T-cell (primary cell): ENCODE measurements at regions of chr1 and their contacts with region 1.

Region 1: GRCh38 chr1:205492201-205492667 is 12.2 kb upstream of the CDK18 start:
- DNase-seq: no peak
- ATAC-seq: no peak
- H3K4me3 ChIP-seq: no peak overlapping the region
- H3K4me3 Mint-ChIP-seq: no peak overlapping the region
- H3K27ac ChIP-seq: no peak overlapping the region
- H3K27ac Mint-ChIP-seq: no peak overlapping the region
- H3K4me1 ChIP-seq: no peaks in the 10 kb centered on the region
- H3K4me1 Mint-ChIP-seq: peaks cover 0 to 6% (median 0%) of the 10 kb centered on the region in 3 donors
- H3K27me3 ChIP-seq: peaks cover 3 to 64% of the 10 kb centered on the region in 2 experiments
- H3K27me3 Mint-ChIP-seq: peaks cover 35 to 45% of the 10 kb centered on the region in 2 donors

Region 2: GRCh38 chr1:205515781-205516253 is 23.6 kb after region 1 on chr1:
- CTCF ChIA-PET with region 1: no interaction called
- POLR2A ChIA-PET with region 1: no interaction called
- DNase-seq: no peak
- ATAC-seq: no peak
- H3K4me3 ChIP-seq: no peak overlapping the region
- H3K4me3 Mint-ChIP-seq: no peak overlapping the region
- H3K27ac ChIP-seq: no peak overlapping the region
- H3K27ac Mint-ChIP-seq: no peak overlapping the region
- H3K4me1 ChIP-seq: no peaks in the 10 kb centered on the region
- H3K4me1 Mint-ChIP-seq: peaks cover 0 to 5% (median 0%) of the 10 kb centered on the region in 3 donors
- H3K27me3 ChIP-seq: peaks cover 0 to 8% of the 10 kb centered on the region in 2 experiments
- H3K27me3 Mint-ChIP-seq: peaks cover 0 to 3% of the 10 kb centered on the region in 2 donors

Region 3: GRCh38 chr1:205528887-205529825 is 36.9 kb after region 1 on chr1:
- CTCF ChIA-PET with region 1: interaction called, 22 to 27 read pairs
- POLR2A ChIA-PET with region 1: interaction called in 1 of 2 experiments, 3 read pairs
- DNase-seq: peak; percentile 41 to 87 (median 77)
- ATAC-seq: peak; percentile 77 to 93 (median 86)
- H3K4me3 ChIP-seq: peak overlapping the region in 1 of 2 donors; percentile 26
- H3K4me3 Mint-ChIP-seq: peak overlapping the region in 2 of 3 donors; percentile 53 to 68
- H3K27ac ChIP-seq: no peak overlapping the region
- H3K27ac Mint-ChIP-seq: no peak overlapping the region
- H3K4me1 ChIP-seq: peaks cover 0 to 9% of the 10 kb centered on the region in 2 experiments
- H3K4me1 Mint-ChIP-seq: peaks cover 3 to 6% (median 4%) of the 10 kb centered on the region in 3 donors
- H3K27me3 ChIP-seq: peaks cover 0 to 28% of the 10 kb centered on the region in 2 experiments
- H3K27me3 Mint-ChIP-seq: peaks cover 4 to 11% of the 10 kb centered on the region in 2 donors